ENCODE measurements at regions of chr7 and their contacts with region 1.

Region 1: GRCh38 chr7:51162724-51163329 is 153.8 kb downstream of the COBL start:
- DNase-seq: peak; percentile 81
- H3K4me3 Mint-ChIP-seq: no peak overlapping the region
- H3K27ac Mint-ChIP-seq: no peak overlapping the region
- H3K4me1 Mint-ChIP-seq: no peaks in the 10 kb centered on the region
- H3K27me3 Mint-ChIP-seq: peaks cover 15% of the 10 kb centered on the region

Region 2: GRCh38 chr7:50696810-50697582 is 465.8 kb before region 1 on chr7:
- CTCF ChIA-PET with region 1: interaction called, 10 read pairs
- DNase-seq: peak; percentile 54
- H3K4me3 Mint-ChIP-seq: no peak overlapping the region
- H3K27ac Mint-ChIP-seq: no peak overlapping the region
- H3K4me1 Mint-ChIP-seq: peaks cover 5% of the 10 kb centered on the region
- H3K27me3 Mint-ChIP-seq: no peaks in the 10 kb centered on the region

Region 3: DNA sequence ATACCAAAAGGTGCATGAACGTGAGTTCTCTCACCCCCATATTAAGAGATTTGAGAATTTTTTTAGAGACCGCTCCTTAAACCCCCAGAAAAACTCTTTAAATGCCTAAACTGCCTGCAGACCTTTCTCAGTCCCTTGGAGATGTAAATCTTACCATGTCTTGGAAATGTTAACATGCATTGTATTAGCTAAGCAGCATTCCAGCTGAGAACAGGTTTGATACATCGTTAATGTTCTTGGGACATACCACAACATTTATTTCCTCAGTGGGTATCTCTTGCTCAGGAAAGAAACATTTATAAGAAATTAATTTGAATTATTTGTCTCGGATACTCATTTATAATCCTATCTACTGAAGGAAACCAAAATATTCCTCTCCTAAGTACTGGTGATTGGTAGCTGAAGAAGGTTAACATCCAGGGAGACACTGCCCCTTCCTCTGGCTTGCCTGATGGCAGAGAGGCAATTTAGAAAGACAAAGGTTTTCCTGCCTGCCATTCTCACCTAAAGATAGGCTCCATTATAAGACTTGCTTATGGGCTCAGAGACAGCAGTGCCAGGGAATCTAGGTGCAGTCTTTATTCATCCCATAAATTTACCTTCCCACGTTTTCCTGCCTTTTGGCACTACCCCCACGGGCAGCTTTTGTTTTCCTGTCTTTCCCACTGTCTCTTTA is 12.6 kb after region 1 on chr7:
- CTCF ChIA-PET with region 1: interaction called, 11 read pairs
- DNase-seq: no peak
- H3K4me3 Mint-ChIP-seq: no peak overlapping the region
- H3K27ac Mint-ChIP-seq: no peak overlapping the region
- H3K4me1 Mint-ChIP-seq: no peaks in the 10 kb centered on the region
- H3K27me3 Mint-ChIP-seq: peaks cover 17% of the 10 kb centered on the region

Region 4: DNA sequence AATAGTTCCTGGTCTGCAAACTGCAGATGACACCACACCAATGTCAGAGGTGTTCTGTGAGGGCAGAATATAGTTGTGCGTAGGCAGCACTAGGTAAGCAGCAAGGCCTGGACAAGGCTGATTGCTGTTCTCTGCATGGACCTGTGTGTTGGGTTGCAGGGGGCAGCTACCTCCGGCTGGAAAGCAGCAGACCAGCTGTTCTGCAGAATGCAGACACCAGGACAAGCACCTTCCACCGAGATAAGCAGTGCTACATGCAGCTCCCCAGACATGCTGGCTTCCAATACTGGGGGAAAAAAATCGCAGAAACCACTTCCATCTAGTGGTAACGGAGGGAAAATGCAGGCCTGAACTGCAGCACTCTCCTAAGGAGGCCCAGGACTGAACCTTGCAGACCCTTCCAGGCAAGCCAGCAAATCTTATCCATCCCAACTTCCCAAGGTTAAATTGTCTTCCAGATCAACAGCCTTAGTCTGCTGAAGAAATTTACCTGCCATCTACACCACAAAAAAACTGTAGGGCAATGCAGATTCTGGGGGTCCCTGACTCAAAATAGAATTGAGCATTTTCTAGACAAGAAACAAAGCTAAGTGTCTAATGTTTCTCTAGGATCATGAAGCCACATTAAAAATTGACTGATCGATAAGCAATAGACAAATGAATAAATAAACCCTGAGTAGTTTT is 204.2 kb after region 1 on chr7:
- CTCF ChIA-PET with region 1: interaction called, 87 read pairs
- DNase-seq: peak; percentile 22
- H3K4me3 Mint-ChIP-seq: no peak overlapping the region
- H3K27ac Mint-ChIP-seq: no peak overlapping the region
- H3K4me1 Mint-ChIP-seq: no peaks in the 10 kb centered on the region
- H3K27me3 Mint-ChIP-seq: peaks cover 9% of the 10 kb centered on the region

Measured in activated naive CD4-positive, alpha-beta T cell treated with anti-CD3 and anti-CD28 coated beads, Interleukin-2, amount 10 ng/mL, durations not matched to agents 7 days and 5 days (primary cell).